Dorsolateral prefrontal cortex (tissue), 120 donors: ENCODE measurements at regions of chr10 and their contacts with region 1.

Region 1: DNA sequence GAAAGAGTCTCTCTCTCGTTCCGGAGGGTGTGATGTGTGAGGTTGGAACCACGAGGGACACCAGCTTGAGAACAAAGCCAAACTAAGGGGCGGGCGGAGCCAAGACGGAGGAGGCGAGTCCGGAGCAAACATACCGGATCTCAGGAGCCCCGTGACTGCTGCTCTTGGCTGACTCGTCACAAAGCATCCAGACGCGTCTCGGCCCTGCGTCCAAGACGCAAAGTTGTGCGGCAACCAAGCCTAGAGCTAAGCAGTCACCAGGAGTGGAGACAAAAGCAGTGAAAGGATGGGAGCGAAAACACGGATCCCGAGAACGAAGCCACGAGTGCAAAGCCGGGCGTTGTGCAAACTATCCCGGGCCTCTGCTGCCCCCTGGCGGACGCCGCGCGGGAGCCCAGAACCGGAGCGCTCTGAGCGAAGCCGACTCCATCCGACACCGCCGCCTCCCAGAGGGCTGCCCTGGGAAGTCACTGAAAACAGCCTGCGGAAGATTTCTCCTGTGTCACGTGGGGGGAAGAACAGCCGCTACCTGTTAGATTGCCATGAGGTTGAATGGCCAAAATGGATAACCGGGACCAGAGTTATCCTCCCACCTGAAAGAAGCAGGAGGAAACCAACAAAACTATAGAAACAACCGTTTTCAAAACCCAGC is 46.4 kb upstream of the TMEM72 start:
- DNase-seq: peak; percentile 81 to 95 (median 92)
- H3K4me3 ChIP-seq: peak overlapping the region; percentile 16 to 74 (median 60)
- H3K27ac ChIP-seq: peak overlapping the region in 39 of 59 donors; percentile 1 to 80 (median 51)
- H3K27me3 ChIP-seq: peaks cover 0 to 7% (median 0%) of the 10 kb centered on the region in 45 donors
- CTCF ChIP-seq: peak; percentile 68 to 99 (median 97)

Region 2: DNA sequence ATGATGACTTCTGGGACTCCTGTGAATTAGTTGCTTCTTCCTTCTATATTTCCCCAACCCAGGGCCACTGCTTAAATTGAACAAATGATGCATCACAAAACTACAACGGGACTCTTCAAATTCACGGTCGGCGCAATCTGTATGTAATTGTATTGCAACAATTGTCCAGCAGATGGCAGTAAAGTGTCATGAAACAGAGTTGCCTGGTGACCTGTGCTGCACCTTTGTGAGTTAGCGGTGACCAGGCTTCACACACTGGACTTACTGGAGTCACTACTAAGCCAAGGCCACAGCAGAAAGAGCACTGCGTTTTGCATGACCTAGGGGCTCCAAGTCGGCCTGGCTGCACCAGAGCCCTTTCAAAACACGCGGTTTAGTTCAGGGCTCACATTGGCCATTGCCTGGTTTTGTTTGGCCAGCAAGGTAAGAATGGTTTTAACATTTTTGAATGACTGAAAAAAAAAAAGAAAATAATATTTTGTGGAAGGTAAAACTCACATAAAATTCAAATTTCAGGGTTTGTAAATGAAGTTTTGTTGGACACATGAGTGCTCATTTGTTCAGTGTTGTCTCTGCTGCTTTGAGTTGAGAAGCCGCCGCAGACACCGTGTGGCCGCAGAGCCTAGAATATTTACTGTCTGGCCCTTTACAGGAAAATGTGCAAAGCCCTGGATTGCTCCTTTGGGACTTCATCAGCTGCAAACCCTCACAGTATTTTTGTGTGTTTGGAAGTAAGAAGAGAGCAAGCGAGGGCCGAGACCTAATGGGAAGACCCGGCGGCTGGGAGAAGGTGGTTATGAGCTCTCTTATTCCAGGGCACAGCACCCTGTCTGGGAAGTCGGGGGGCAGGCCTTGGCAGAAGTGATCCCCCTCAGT is 1192.9 kb before region 1 on chr10:
- intact Hi-C with region 1: loop called (anchors 2 to 5 kb)
- DNase-seq: peak in 3 of 10 donors; percentile 50 to 61 (median 59)
- H3K4me3 ChIP-seq: no peak overlapping the region
- H3K27ac ChIP-seq: no peak overlapping the region
- H3K27me3 ChIP-seq: peaks cover 0 to 39% (median 18%) of the 10 kb centered on the region in 45 donors
- CTCF ChIP-seq: peak; percentile 64 to 95 (median 85)

Region 3: GRCh38 chr10:43689955-43690771 is 1174.6 kb before region 1 on chr10:
- intact Hi-C with region 1: loop called (anchors 5 kb)
- DNase-seq: peak; percentile 63 to 88 (median 78)
- H3K4me3 ChIP-seq: peak overlapping the region; percentile 34 to 88 (median 68)
- H3K27ac ChIP-seq: peak overlapping the region in 37 of 59 donors; percentile 5 to 82 (median 67)
- H3K27me3 ChIP-seq: peaks cover 0 to 9% (median 0%) of the 10 kb centered on the region in 45 donors
- CTCF ChIP-seq: peak; percentile 41 to 98 (median 82)

Region 4: GRCh38 chr10:44878706-44879530 is 14.2 kb after region 1 on chr10:
- intact Hi-C with region 1: loop called in 1 of 2 experiments (anchors 2 kb)
- DNase-seq: peak; percentile 85 to 95 (median 91)
- H3K4me3 ChIP-seq: peak overlapping the region; percentile 40 to 73 (median 59)
- H3K27ac ChIP-seq: peak overlapping the region in 58 of 59 donors; percentile 7 to 93 (median 78)
- H3K27me3 ChIP-seq: no peaks in the 10 kb centered on the region
- CTCF ChIP-seq: peak in 40 of 56 donors; percentile 4 to 57 (median 32)

Region 5: GRCh38 chr10:44925224-44925623 is 60.5 kb after region 1 on chr10:
- intact Hi-C with region 1: no loop called
- DNase-seq: no peak
- H3K4me3 ChIP-seq: no peak overlapping the region
- H3K27ac ChIP-seq: no peak overlapping the region
- H3K27me3 ChIP-seq: no peaks in the 10 kb centered on the region
- CTCF ChIP-seq: peak in 13 of 56 donors; percentile 8 to 29 (median 11)